PC-9 (cell line): ENCODE measurements at regions of chr3 and their contacts with region 1.

Region 1: DNA sequence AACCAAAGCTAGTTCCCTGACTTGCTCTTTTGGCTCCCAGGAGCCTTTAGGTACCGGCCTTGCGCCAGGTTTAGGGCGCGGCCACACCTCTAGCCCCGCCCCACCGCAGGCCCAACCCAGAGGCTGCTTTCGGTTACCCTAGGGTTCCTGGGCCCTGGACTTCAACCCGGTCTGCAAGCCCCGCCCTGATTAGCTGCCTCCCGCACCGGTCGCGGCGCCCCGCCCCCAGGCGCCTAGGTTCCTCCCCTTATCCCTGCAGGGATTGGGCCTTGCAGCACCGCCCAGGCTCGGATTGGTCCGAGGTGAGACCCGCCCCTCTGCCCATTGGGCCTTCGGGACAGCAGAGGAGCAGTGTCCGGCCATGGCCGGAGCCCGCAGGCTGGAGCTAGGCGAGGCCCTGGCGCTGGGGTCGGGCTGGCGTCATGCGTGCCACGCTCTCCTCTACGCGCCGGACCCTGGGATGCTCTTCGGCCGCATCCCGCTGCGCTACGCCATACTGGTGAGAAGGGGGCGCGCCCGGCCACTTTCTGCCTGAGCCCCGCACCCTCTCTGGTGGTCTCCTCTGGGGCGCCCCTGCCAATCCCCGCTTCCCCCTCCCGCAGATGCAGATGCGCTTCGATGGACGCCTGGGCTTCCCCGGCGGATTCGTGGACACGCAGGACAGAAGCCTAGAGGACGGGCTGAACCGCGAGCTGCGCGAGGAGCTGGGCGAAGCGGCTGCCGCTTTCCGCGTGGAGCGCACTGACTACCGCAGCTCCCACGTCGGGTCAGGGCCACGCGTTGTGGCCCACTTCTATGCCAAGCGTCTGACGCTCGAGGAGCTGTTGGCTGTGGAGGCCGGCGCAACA is at the start of gene NUDT16:
- DNase-seq: peak; percentile 97 to 100
- H3K4me3 ChIP-seq: peak within 1 kb of the TSS; percentile 62
- H3K27ac ChIP-seq: no peak within 1 kb of the TSS
- H3K4me1 ChIP-seq: 0 out of 2 replicates have a peak, but pooled peaks cover 5% of the 10 kb centered on the region
- H3K27me3 ChIP-seq: no peaks in the 10 kb centered on the region
- CTCF ChIP-seq: no peak
- total RNA-seq, gene NUDT16: 19.4 and 19.5 TPM in 2 replicates

Region 2: DNA sequence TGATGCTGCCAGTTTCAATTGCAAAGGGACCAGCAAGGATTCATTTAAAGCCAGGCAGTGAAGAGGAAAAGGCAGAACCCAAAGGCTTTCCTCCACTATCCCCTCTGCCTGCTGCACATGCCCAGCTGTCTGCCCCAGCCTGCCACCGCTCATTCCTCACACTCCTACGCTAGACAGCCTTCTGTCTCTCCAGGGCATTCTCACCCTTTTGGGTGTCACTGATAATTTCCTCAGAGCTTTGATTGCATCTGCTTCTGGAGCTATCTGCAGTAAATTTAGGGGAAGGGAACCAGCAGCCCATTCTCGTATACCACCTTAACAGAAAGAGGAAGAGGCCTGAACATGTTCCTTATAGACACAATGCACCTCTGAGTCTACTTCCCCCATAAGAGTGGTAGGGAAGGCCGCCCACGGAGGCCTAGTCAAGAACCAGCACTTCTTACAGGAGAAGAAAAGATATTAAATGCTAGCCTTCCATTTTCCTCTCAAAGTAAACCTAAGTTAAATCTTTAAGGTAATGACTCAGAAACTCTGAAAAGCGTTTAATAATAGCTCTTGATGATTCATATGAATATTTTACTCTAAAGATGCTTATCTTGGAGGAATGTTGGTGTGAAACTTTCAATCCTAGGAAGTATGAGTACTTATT is 20.8 kb after region 1 on chr3:
- CTCF ChIA-PET with region 1: no interaction called
- POLR2A ChIA-PET with region 1: interaction called, 4 read pairs
- intact Hi-C with region 1: loop called (anchors 2 kb)
- DNase-seq: peak; percentile 25 to 83
- H3K4me3 ChIP-seq: no peak overlapping the region
- H3K27ac ChIP-seq: peak overlapping the region; percentile 27; the same call in 1 of the 2 replicates
- H3K4me1 ChIP-seq: peaks cover 18% of the 10 kb centered on the region
- H3K27me3 ChIP-seq: no peaks in the 10 kb centered on the region
- CTCF ChIP-seq: no peak

Region 3: GRCh38 chr3:132682201-132682600 is 1300.5 kb after region 1 on chr3:
- CTCF ChIA-PET with region 1: no interaction called
- POLR2A ChIA-PET with region 1: interaction called, 10 read pairs
- intact Hi-C with region 1: no loop called
- DNase-seq: no peak
- H3K4me3 ChIP-seq: no peak overlapping the region
- H3K27ac ChIP-seq: no peak overlapping the region
- H3K4me1 ChIP-seq: no peaks in the 10 kb centered on the region
- H3K27me3 ChIP-seq: no peaks in the 10 kb centered on the region
- CTCF ChIP-seq: no peak